Colonic mucosa (tissue), 4 donors: ENCODE measurements at regions of chr2 and their contacts with region 1.

Region 1: GRCh38 chr2:178914259-178914849 is 107.1 kb upstream of the TTN start:
- DNase-seq: peak; percentile 77
- H3K4me3 ChIP-seq: no peak overlapping the region
- H3K27ac ChIP-seq: no peak overlapping the region
- H3K4me1 ChIP-seq: no peaks in the 10 kb centered on the region
- H3K27me3 ChIP-seq: no peaks in the 10 kb centered on the region
- CTCF ChIP-seq: peak; percentile 61

Region 2: DNA sequence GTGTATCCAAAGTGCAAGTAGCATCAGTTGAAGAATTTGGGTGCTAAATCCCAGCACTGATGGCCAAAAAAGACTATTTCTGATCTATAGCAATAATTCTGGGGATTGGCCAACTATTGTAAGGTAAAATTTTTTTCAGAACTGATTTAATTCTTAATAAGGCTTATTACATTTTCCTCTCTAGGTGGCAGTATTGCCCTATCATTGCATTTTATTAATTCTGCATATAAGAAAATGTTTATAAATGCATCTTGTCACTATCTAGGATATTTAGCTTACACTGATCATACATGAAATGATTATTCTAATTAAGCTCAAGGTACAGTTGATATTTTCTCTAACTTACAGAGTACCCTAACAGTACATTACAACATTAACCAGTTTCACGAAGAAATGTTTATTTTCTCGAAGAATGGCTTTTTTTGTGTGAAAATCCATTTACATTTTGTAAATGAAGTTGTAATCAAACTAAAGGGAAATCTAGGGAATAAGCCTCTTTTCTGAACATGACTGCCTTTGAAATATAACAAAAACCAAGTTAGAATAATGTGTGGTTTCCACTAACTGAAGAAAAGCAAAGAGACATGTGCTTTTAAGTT is 118.2 kb before region 1 on chr2:
- intact Hi-C with region 1: loop called (anchors 10 kb)
- DNase-seq: no peak
- H3K4me3 ChIP-seq: no peak overlapping the region
- H3K27ac ChIP-seq: no peak overlapping the region
- H3K4me1 ChIP-seq: no peaks in the 10 kb centered on the region
- H3K27me3 ChIP-seq: no peaks in the 10 kb centered on the region
- CTCF ChIP-seq: peak; percentile 38

Region 3: DNA sequence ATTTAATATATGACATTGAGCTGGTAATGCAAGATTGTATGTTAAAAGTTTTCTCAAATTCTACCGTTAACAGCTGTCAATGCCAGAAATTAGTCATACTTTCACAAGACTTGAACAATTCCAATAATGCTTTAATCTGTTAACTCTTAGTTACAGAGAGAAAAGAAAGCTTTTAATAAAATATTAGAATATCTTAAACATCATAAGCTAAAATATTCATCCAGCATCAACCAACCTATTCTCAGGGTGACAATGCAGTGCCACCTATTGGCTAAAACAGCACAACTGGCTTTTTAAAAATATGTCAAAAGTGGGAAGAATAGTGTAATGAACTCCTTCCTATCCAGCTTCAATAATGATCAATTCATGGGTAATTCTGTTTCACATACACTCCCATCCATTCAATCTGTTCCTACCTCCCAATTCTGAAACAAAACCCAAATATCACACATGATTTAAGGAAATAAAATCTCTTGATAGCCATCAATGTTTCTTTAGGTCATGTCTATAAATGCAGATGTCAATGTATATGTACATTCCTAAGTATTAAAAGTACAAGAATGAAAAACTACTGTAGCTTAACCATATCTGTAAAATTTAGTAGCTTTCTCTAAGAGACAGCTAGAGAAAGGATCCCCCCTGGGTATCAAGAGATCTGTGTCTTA is 215.4 kb after region 1 on chr2:
- intact Hi-C with region 1: loop called (anchors 10 kb)
- DNase-seq: no peak
- H3K4me3 ChIP-seq: no peak overlapping the region
- H3K27ac ChIP-seq: no peak overlapping the region
- H3K4me1 ChIP-seq: no peaks in the 10 kb centered on the region
- H3K27me3 ChIP-seq: no peaks in the 10 kb centered on the region
- CTCF ChIP-seq: peak; percentile 58